ENCODE measurements at regions of chr3 and their contacts with region 1.

Region 1: GRCh38 chr3:45593708-45594609 is 592 bp upstream of the LIMD1 start:
- DNase-seq: peak; percentile 57 to 60 (median 58)
- H3K4me3 ChIP-seq: peak overlapping the region; percentile 57 to 91 (median 85)
- H3K4me3 Mint-ChIP-seq: peak overlapping the region; percentile 91 to 93
- H3K27ac ChIP-seq: peak overlapping the region; percentile 71 to 82
- H3K27ac Mint-ChIP-seq: peak overlapping the region; percentile 90 to 95 (median 94)
- H3K4me1 ChIP-seq: peaks cover 57 to 61% of the 10 kb centered on the region in 2 donors
- H3K4me1 Mint-ChIP-seq: peaks cover 55% of the 10 kb centered on the region
- H3K27me3 ChIP-seq: no peaks in the 10 kb centered on the region
- H3K27me3 Mint-ChIP-seq: peaks cover 3 to 5% (median 4%) of the 10 kb centered on the region in 3 donors
- CTCF ChIP-seq: no peak

Region 2: GRCh38 chr3:45464336-45465170 is 129.4 kb before region 1 on chr3:
- intact Hi-C with region 1: no loop called
- DNase-seq: peak; percentile 53 to 72 (median 69)
- H3K4me3 ChIP-seq: peak overlapping the region in 1 of 3 experiments; percentile 44
- H3K4me3 Mint-ChIP-seq: peak overlapping the region; percentile 21 to 57
- H3K27ac ChIP-seq: peak overlapping the region; percentile 11 to 73
- H3K27ac Mint-ChIP-seq: peak overlapping the region; percentile 80 to 95 (median 90)
- H3K4me1 ChIP-seq: peaks cover 17 to 21% of the 10 kb centered on the region in 2 donors
- H3K4me1 Mint-ChIP-seq: peaks cover 28% of the 10 kb centered on the region
- H3K27me3 ChIP-seq: no peaks in the 10 kb centered on the region
- H3K27me3 Mint-ChIP-seq: peaks cover 0 to 2% (median 0%) of the 10 kb centered on the region in 3 donors
- CTCF ChIP-seq: no peak

Region 3: DNA sequence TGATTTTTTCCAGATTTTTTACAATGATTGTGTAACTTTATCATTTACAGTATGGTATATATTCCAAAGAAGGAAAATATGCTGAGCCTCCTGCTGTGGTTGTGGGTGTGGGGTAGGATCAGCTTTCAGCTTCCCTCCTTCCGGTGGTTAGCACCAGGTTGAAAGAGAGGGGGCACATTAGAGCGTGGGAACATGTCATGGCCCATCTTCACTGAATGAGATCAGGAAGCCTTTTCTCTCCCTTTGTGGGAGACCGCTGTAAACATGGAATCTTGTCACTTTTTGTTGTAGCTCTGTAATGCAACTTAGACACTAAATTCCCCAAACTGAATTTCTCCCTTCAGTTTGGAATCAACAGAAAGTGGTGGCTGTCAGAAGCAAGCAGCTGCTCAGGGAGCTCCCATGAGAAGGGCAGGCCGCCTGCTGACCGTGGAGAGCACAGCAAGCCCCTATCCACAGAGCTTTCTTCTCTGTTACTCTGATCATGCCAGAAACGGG is 86.1 kb before region 1 on chr3:
- intact Hi-C with region 1: loop called in 1 of 2 experiments (anchors 5 kb)
- DNase-seq: no peak
- H3K4me3 ChIP-seq: no peak overlapping the region
- H3K4me3 Mint-ChIP-seq: no peak overlapping the region
- H3K27ac ChIP-seq: no peak overlapping the region
- H3K27ac Mint-ChIP-seq: no peak overlapping the region
- H3K4me1 ChIP-seq: no peaks in the 10 kb centered on the region
- H3K4me1 Mint-ChIP-seq: no peaks in the 10 kb centered on the region
- H3K27me3 ChIP-seq: no peaks in the 10 kb centered on the region
- H3K27me3 Mint-ChIP-seq: no peaks in the 10 kb centered on the region
- CTCF ChIP-seq: peak; percentile 23

Region 4: DNA sequence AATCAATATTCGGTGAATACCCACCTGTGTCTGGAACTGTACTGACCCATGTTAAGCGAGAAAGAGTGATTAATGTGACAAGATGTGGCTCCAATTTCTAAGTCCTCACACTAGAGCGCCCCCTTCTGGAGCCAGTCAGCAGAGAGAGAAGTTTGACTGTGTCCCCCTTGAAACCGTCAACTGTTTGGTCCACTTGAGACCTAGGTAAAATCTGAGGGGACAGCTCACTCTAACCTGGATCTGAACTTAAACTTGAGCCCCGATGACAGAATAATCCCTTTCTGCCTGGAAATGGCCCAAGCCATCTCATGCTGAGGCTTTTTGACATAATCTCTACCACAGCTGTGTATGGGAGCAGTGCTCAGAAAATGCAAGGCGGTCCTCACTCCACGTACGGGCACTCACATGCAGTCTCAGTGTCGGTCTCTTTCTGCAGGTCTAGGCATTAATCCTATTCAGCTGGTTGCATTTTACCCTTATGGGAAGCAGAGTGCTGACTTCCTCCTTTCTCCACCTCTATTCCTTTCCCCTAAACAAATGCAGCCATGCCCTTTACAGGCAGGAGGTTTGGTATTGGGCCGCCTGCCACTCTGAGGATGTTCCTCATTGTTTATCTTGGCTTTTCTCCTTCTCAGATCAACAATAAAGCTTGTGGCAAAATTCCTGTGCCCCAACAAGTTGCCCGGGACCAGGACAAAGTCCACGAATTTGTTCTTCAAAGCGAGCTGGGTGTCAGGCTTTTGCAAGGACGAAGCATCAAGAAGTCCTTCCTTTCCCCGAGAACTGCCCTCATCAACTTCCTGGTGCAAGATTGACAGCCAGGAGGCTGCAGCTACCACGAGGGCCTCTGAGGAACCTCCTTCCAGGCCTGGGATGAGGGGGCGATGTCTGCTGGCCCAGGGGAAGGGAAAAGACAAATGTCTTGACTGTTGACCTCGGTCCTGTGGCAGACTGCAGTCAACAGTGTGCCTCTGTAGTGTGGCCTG is 47.0 kb before region 1 on chr3:
- intact Hi-C with region 1: loop called in 1 of 2 experiments (anchors 5 kb)
- DNase-seq: peak in 2 of 3 donors; percentile 38 to 39
- H3K4me3 ChIP-seq: peak overlapping the region in 1 of 3 experiments; percentile 10
- H3K4me3 Mint-ChIP-seq: peak overlapping the region; percentile 25 to 72
- H3K27ac ChIP-seq: peak overlapping the region; percentile 68 to 86
- H3K27ac Mint-ChIP-seq: peak overlapping the region; percentile 86 to 98 (median 96)
- H3K4me1 ChIP-seq: peaks cover 51 to 57% of the 10 kb centered on the region in 2 donors
- H3K4me1 Mint-ChIP-seq: peaks cover 52% of the 10 kb centered on the region
- H3K27me3 ChIP-seq: no peaks in the 10 kb centered on the region
- H3K27me3 Mint-ChIP-seq: peaks cover 0 to 2% (median 2%) of the 10 kb centered on the region in 3 donors
- CTCF ChIP-seq: peak; percentile 39

Region 5: DNA sequence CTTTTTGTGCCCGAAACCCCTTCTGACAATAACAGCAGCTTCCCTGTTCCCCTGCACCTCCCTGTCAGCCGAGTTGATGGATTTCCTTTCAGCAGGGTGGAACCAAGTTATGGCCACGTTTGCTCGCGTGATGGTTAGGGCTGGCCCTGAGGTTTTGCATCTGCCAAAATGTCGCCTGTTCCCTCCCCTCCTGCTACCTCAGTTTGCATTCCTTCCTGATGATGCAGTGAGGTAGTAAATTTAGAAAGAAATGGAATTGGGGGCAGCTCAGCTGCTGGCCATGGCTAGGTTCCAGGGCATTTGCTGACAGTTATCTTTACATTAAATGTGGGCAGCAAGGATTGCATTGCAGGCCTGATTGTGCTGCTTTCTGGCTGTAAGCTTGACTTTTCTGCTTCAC is 13.8 kb after region 1 on chr3:
- intact Hi-C with region 1: loop called in 1 of 2 experiments (anchors 2 kb)
- DNase-seq: no peak
- H3K4me3 ChIP-seq: no peak overlapping the region
- H3K4me3 Mint-ChIP-seq: no peak overlapping the region
- H3K27ac ChIP-seq: peak overlapping the region; percentile 29 to 72
- H3K27ac Mint-ChIP-seq: peak overlapping the region; percentile 84 to 94 (median 91)
- H3K4me1 ChIP-seq: peaks cover 14 to 34% of the 10 kb centered on the region in 2 donors
- H3K4me1 Mint-ChIP-seq: peaks cover 42% of the 10 kb centered on the region
- H3K27me3 ChIP-seq: no peaks in the 10 kb centered on the region
- H3K27me3 Mint-ChIP-seq: no peaks in the 10 kb centered on the region
- CTCF ChIP-seq: no peak

Region 6: GRCh38 chr3:45647148-45647619 is 53.2 kb after region 1 on chr3:
- intact Hi-C with region 1: loop called in 1 of 2 experiments (anchors 5 kb)
- DNase-seq: peak; percentile 82 to 94 (median 92)
- H3K4me3 ChIP-seq: peak overlapping the region in 1 of 3 experiments; percentile 19
- H3K4me3 Mint-ChIP-seq: peak overlapping the region; percentile 20 to 53
- H3K27ac ChIP-seq: peak overlapping the region; percentile 95 to 97
- H3K27ac Mint-ChIP-seq: peak overlapping the region; percentile 90 to 99 (median 98)
- H3K4me1 ChIP-seq: peaks cover 53 to 59% of the 10 kb centered on the region in 2 donors
- H3K4me1 Mint-ChIP-seq: peaks cover 64% of the 10 kb centered on the region
- H3K27me3 ChIP-seq: no peaks in the 10 kb centered on the region
- H3K27me3 Mint-ChIP-seq: peaks cover 0 to 6% (median 0%) of the 10 kb centered on the region in 3 donors
- CTCF ChIP-seq: no peak

Region 7: GRCh38 chr3:45656575-45657363 is 62.8 kb after region 1 on chr3:
- intact Hi-C with region 1: loop called (anchors 2 kb)
- DNase-seq: peak; percentile 95 to 97 (median 96)
- H3K4me3 ChIP-seq: no peak overlapping the region
- H3K4me3 Mint-ChIP-seq: peak overlapping the region; percentile 53 to 60
- H3K27ac ChIP-seq: peak overlapping the region; percentile 42 to 65
- H3K27ac Mint-ChIP-seq: peak overlapping the region; percentile 92 to 98 (median 97)
- H3K4me1 ChIP-seq: peaks cover 36 to 40% of the 10 kb centered on the region in 2 donors
- H3K4me1 Mint-ChIP-seq: peaks cover 46% of the 10 kb centered on the region
- H3K27me3 ChIP-seq: no peaks in the 10 kb centered on the region
- H3K27me3 Mint-ChIP-seq: no peaks in the 10 kb centered on the region
- CTCF ChIP-seq: peak; percentile 85

Measured in CD14-positive monocyte (primary cell).